ENCODE measurements at regions of chr15 and their contacts with region 1.

Region 1: GRCh38 chr15:56365075-56365711 is at the start of gene TEX9:
- DNase-seq: peak; percentile 8 to 78 (median 48)
- ATAC-seq: peak; percentile 90
- H3K4me3 ChIP-seq: peak within 1 kb of the TSS; percentile 39
- H3K4me3 Mint-ChIP-seq: peak within 1 kb of the TSS; percentile 78 to 94 (median 88)
- H3K27ac ChIP-seq: no peak within 1 kb of the TSS
- H3K27ac Mint-ChIP-seq: peak within 1 kb of the TSS in 3 of 9 donors; percentile 7 to 48 (median 28)
- H3K4me1 ChIP-seq: peaks cover 0 to 5% of the 10 kb centered on the region in 2 donors
- H3K4me1 Mint-ChIP-seq: peaks cover 10 to 18% (median 16%) of the 10 kb centered on the region in 7 donors
- H3K27me3 ChIP-seq: no peaks in the 10 kb centered on the region
- H3K27me3 Mint-ChIP-seq: peaks cover 42 to 81% (median 50%) of the 10 kb centered on the region in 5 donors
- total RNA-seq, gene TEX9: 1.6 to 3.1 (median 1.9) TPM

Region 2: GRCh38 chr15:56390739-56391267 is 25.6 kb after region 1 on chr15:
- CTCF ChIA-PET with region 1: no interaction called
- POLR2A ChIA-PET with region 1: no interaction called
- intact Hi-C with region 1: no loop called
- DNase-seq: no peak
- ATAC-seq: no peak
- H3K4me3 ChIP-seq: no peak overlapping the region
- H3K4me3 Mint-ChIP-seq: no peak overlapping the region
- H3K27ac ChIP-seq: no peak overlapping the region
- H3K27ac Mint-ChIP-seq: no peak overlapping the region
- H3K4me1 ChIP-seq: no peaks in the 10 kb centered on the region
- H3K4me1 Mint-ChIP-seq: no peaks in the 10 kb centered on the region
- H3K27me3 ChIP-seq: no peaks in the 10 kb centered on the region
- H3K27me3 Mint-ChIP-seq: peaks cover 0 to 15% (median 0%) of the 10 kb centered on the region in 5 donors

Region 3: GRCh38 chr15:56411122-56411749 is 46.0 kb after region 1 on chr15:
- CTCF ChIA-PET with region 1: no interaction called
- POLR2A ChIA-PET with region 1: no interaction called
- intact Hi-C with region 1: loop called in 1 of 2 experiments (anchors 5 kb)
- DNase-seq: no peak
- ATAC-seq: no peak
- H3K4me3 ChIP-seq: no peak overlapping the region
- H3K4me3 Mint-ChIP-seq: no peak overlapping the region
- H3K27ac ChIP-seq: no peak overlapping the region
- H3K27ac Mint-ChIP-seq: no peak overlapping the region
- H3K4me1 ChIP-seq: no peaks in the 10 kb centered on the region
- H3K4me1 Mint-ChIP-seq: no peaks in the 10 kb centered on the region
- H3K27me3 ChIP-seq: no peaks in the 10 kb centered on the region
- H3K27me3 Mint-ChIP-seq: no peaks in the 10 kb centered on the region

Region 4: GRCh38 chr15:56440214-56440770 is 75.1 kb after region 1 on chr15:
- CTCF ChIA-PET with region 1: no interaction called
- POLR2A ChIA-PET with region 1: no interaction called
- intact Hi-C with region 1: no loop called
- DNase-seq: no peak
- ATAC-seq: no peak
- H3K4me3 ChIP-seq: no peak overlapping the region
- H3K4me3 Mint-ChIP-seq: no peak overlapping the region
- H3K27ac ChIP-seq: no peak overlapping the region
- H3K27ac Mint-ChIP-seq: no peak overlapping the region
- H3K4me1 ChIP-seq: no peaks in the 10 kb centered on the region
- H3K4me1 Mint-ChIP-seq: no peaks in the 10 kb centered on the region
- H3K27me3 ChIP-seq: no peaks in the 10 kb centered on the region
- H3K27me3 Mint-ChIP-seq: peaks cover 11 to 27% (median 15%) of the 10 kb centered on the region in 5 donors

Region 5: GRCh38 chr15:56464893-56465520 is 99.8 kb after region 1 on chr15 and contains the start of gene MNS1:
- CTCF ChIA-PET with region 1: no interaction called
- POLR2A ChIA-PET with region 1: no interaction called
- intact Hi-C with region 1: loop called in 1 of 2 experiments (anchors 5 kb)
- DNase-seq: peak; percentile 41 to 75 (median 50)
- ATAC-seq: peak; percentile 97
- H3K4me3 ChIP-seq: peak within 1 kb of the TSS; percentile 44
- H3K4me3 Mint-ChIP-seq: peak within 1 kb of the TSS; percentile 65 to 96 (median 86)
- H3K27ac ChIP-seq: no peak within 1 kb of the TSS
- H3K27ac Mint-ChIP-seq: peak within 1 kb of the TSS in 2 of 9 donors; percentile 75 to 87
- H3K4me1 ChIP-seq: peaks cover 0 to 5% of the 10 kb centered on the region in 2 donors
- H3K4me1 Mint-ChIP-seq: peaks cover 12 to 36% (median 27%) of the 10 kb centered on the region in 7 donors
- H3K27me3 ChIP-seq: no peaks in the 10 kb centered on the region
- H3K27me3 Mint-ChIP-seq: peaks cover 15 to 39% (median 22%) of the 10 kb centered on the region in 5 donors
- total RNA-seq, gene MNS1: 0.24 to 0.53 TPM in 2 of 5 experiments, not detected in the others

Measured in naive thymus-derived CD4-positive, alpha-beta T cell (primary cell).